A673 (cell line): ENCODE measurements at regions of chr16 and their contacts with region 1.

Region 1: DNA sequence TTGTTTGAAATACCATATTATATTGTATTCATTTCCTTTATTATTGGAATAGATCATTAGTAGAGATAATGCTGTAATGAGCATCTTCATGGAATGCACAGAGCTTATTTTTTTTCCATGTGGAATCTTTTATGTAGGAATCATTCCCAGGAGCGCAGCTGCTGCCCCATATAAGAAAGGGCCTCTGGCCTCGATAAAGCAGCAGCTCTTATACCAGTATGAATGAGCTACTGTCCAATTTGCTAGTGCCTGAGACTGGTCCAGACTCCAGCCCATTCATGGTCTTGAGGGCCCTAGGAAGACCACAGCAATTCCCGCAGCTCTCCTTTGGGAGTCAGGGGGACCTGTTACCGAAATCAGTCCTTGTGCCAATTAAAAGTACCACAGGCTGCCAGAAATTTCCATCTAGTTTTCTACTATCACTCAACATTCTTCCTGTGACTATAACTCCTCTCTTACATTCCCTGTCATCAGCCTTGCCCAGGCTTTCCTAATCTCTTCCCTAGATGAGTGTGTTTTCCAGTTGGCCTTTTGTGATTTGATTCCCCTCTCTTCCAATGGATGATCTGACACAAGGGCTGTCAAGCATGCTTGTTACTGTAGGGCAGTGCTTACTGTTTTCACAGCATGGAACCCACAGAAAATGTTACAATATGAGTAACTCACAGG is 1.9 kb downstream of the ZNF843 start:
- DNase-seq: no peak
- H3K4me3 ChIP-seq: no peak overlapping the region
- H3K27ac ChIP-seq: no peak overlapping the region
- H3K4me1 ChIP-seq: no peaks in the 10 kb centered on the region
- H3K27me3 ChIP-seq: no peaks in the 10 kb centered on the region
- CTCF ChIP-seq: no peak

Region 2: DNA sequence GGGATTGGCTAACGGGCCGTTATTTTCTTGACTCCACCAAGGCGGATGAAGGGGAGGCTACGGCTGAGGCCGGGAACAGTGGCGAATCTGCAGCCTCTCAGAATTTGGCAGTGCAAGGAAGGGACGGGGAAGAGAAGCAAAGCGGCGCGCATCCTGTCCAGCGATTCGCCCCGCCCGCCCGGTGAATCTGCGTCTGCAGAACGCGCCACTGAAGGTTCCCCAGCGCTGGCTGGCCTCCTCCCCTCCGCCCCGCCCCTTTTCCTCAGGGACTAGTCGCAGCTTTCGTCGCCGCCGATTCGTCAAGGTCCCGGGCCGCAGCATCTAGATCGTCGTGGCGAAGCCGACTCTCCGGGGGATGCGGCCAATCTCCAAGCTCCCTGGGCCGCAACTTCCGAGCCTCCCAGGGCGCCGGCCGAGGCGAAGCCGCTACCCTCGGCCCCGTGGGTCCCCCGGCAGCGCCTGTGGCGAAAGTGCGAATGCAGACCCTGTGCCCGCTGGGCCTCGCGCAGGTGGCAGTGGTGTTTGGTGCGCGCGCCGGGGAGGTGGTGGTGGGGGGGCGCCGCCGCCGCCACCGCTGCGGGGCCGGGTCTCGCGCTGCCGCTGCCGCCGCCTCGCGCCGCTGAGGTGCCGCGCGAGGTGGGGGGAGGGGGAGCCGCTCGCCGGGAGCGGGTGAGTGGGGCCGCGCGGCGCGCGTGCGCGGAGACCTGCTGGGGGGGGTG is 483.0 kb before region 1 on chr16 and contains the start of gene SETD1A:
- CTCF ChIA-PET with region 1: no interaction called
- POLR2A ChIA-PET with region 1: no interaction called
- intact Hi-C with region 1: loop called (anchors 2 kb)
- DNase-seq: peak; percentile 98
- H3K4me3 ChIP-seq: peak within 1 kb of the TSS; percentile 80
- H3K27ac ChIP-seq: peak within 1 kb of the TSS; percentile 99
- H3K4me1 ChIP-seq: peaks cover 10% of the 10 kb centered on the region
- H3K27me3 ChIP-seq: no peaks in the 10 kb centered on the region
- CTCF ChIP-seq: no peak
- total RNA-seq, gene SETD1A: 31.4 and 37.1 TPM in 2 replicates

Region 3: DNA sequence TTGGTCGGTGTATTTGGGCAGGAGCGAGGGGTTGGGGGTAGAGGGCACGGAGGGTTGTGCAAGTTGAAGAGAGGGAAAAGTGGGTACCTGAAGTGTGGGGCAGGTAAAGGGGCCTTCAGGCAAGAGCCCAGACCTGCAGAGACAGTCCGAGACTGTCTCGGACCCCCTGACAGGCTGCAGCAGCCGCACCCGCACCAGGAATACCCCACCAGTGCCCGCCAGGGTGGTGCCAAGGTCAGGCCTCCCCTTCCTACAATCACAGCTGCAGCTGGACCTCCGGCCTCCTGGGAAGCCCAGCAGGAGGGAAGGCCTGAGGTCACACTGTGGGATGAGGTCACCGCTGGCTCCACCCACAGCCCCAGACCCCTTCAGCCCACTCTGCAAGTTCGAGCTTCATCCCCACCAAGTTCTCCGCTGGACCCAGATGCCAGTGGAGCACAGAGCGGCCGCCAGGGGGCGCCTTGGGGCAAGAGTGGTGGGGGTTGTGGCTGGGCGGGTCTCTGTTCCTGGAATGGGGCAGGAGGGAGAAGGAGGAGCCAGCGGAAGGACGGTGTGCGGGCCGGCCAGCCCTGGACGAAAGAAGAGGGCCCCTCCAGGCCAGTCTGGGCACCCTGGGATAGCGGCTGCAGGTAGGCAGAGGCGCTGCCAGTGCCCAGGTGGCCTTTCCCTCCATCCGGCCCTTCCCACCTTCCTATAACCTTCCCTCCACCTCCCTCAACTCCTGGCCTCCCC is 455.8 kb before region 1 on chr16 and contains the start of gene HSD3B7:
- CTCF ChIA-PET with region 1: interaction called, 4 read pairs
- POLR2A ChIA-PET with region 1: no interaction called
- intact Hi-C with region 1: loop called (anchors 2 kb)
- DNase-seq: peak; percentile 85
- H3K4me3 ChIP-seq: no peak within 1 kb of the TSS
- H3K27ac ChIP-seq: no peak within 1 kb of the TSS
- H3K4me1 ChIP-seq: no peaks in the 10 kb centered on the region
- H3K27me3 ChIP-seq: no peaks in the 10 kb centered on the region
- CTCF ChIP-seq: peak; percentile 97
- total RNA-seq, gene HSD3B7: 0.85 and 0.95 TPM in 2 replicates

Region 4: GRCh38 chr16:31202414-31203375 is 238.0 kb before region 1 on chr16 and contains the start of gene PYCARD:
- CTCF ChIA-PET with region 1: no interaction called
- POLR2A ChIA-PET with region 1: no interaction called
- intact Hi-C with region 1: loop called (anchors 5 kb)
- DNase-seq: no peak
- H3K4me3 ChIP-seq: peak within 1 kb of the TSS; percentile 49
- H3K27ac ChIP-seq: no peak within 1 kb of the TSS
- H3K4me1 ChIP-seq: no peaks in the 10 kb centered on the region
- H3K27me3 ChIP-seq: peaks cover 9% of the 10 kb centered on the region
- CTCF ChIP-seq: no peak
- total RNA-seq, gene PYCARD: 1.8 and 2.0 TPM in 2 replicates

Region 5: GRCh38 chr16:31371619-31372484 is 68.8 kb before region 1 on chr16:
- CTCF ChIA-PET with region 1: interaction called, 11 read pairs
- POLR2A ChIA-PET with region 1: no interaction called
- intact Hi-C with region 1: no loop called
- DNase-seq: no peak
- H3K4me3 ChIP-seq: no peak overlapping the region
- H3K27ac ChIP-seq: no peak overlapping the region
- H3K4me1 ChIP-seq: no peaks in the 10 kb centered on the region
- H3K27me3 ChIP-seq: peaks cover 6% of the 10 kb centered on the region
- CTCF ChIP-seq: no peak